HAP-1 (cell line): ENCODE measurements at regions of chr1 and their contacts with region 1.

Region 1: GRCh38 chr1:154878371-154879022 is 8.4 kb upstream of the KCNN3 start:
- DNase-seq: peak; percentile 73 to 88
- H3K4me3 ChIP-seq: no peak overlapping the region
- H3K4me1 ChIP-seq: no peaks in the 10 kb centered on the region
- H3K27me3 ChIP-seq: no peaks in the 10 kb centered on the region

Region 2: GRCh38 chr1:154559466-154560088 is 318.9 kb before region 1 on chr1:
- in situ Hi-C with region 1: loop called (anchors 5 kb)
- DNase-seq: peak; percentile 88 to 93
- H3K4me3 ChIP-seq: peak overlapping the region; percentile 32
- H3K4me1 ChIP-seq: peaks cover 17% of the 10 kb centered on the region
- H3K27me3 ChIP-seq: no peaks in the 10 kb centered on the region